HepG2 (cell line): ENCODE measurements at regions of chr19 and their contacts with region 1.

Region 1: DNA sequence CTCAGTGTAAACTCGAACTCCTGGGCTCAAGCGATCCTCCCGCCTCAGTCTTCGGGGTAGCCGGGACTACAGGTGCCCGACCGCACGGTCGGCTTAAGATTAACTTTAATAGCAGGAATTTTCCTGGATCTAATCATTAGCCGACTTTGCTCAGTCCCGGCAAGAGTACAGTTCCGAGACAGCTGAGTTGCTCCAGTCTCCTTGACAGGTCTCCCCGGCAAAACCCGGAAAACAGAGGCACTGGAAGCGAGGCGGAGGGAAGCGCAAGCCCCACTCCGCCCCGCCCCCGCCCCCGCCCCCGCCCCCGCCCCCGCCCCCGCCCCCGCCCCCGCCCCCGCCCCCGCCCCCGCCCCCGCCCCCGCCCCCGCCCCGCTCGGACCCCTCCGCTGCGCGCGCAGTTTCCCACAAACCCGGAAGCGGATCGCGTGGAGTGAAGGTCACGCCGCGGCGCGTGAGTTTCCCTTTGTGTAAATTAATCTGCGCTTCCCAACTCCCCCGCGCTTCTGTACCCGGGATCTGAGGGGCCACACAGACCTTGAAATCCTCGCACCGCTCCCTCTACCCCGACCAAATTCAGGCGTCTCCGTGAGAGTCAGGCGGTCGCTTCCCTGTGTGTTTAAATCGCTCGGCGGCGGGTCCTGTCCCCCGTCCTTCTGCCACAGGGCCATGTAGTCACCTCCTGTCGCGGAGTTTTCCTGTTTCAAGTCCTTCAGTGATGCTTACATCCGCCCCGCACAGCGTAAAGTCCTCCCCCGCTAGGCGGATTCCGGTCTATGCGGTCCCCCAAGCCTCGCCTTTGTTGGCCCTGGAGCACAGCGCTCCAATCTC is at the start of gene ZNF480:
- DNase-seq: peak; percentile 68
- ATAC-seq: peak; percentile 86
- H3K4me3 ChIP-seq: peak within 1 kb of the TSS; percentile 97 to 99 (median 99)
- H3K27ac ChIP-seq: peak within 1 kb of the TSS; percentile 89
- H3K4me1 ChIP-seq: peaks cover 9% of the 10 kb centered on the region
- H3K27me3 ChIP-seq: no peaks in the 10 kb centered on the region; a peak in 1 of 5 replicates
- CTCF ChIP-seq: peak; percentile 24; the same call in 1 of the 2 replicates
- EP300 ChIP-seq: no peak
- POLR2A ChIP-seq: peak; percentile 81
- RAD21 ChIP-seq: no peak
- total RNA-seq, gene ZNF480: 9.6 and 22.2 TPM in 2 replicates

Region 2: GRCh38 chr19:50568321-50569075 is 1728.5 kb before region 1 on chr19 and contains the start of gene LRRC4B:
- CTCF ChIA-PET with region 1: no interaction called
- POLR2A ChIA-PET with region 1: no interaction called
- in situ Hi-C with region 1: no loop called
- intact Hi-C with region 1: loop called (anchors 10 kb)
- DNase-seq: no peak
- ATAC-seq: no peak
- H3K4me3 ChIP-seq: no peak within 1 kb of the TSS
- H3K27ac ChIP-seq: no peak within 1 kb of the TSS
- H3K4me1 ChIP-seq: no peaks in the 10 kb centered on the region
- H3K27me3 ChIP-seq: peaks cover 6 to 53% of the 10 kb centered on the region in 2 experiments; a peak in 4 of 5 replicates
- CTCF ChIP-seq: no peak
- EP300 ChIP-seq: no peak
- POLR2A ChIP-seq: no peak
- RAD21 ChIP-seq: no peak
- total RNA-seq, gene LRRC4B: not detected in 2 replicates